ENCODE measurements at regions of chr1 and their contacts with region 1.

Region 1: DNA sequence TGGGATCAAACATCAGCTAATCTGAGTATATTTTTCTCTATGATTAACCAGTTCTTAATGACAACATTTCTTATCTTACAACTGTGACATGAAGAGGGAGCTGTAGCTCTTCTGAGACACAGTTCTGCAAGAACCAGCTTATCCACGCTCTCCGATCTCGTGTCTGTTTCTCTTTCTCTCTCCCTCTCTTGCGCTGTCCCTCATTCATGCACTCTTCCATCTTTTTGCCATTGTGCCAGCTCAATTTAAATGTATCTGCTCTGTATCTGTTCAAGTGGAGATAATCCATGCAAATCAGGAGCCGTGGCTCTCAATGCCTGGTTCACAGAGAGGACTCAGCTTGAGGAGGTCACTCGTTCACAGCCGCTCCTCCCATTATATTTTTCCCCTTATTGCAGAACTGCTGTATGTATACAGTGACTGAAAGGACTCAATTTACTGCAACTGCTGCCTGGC is 494.7 kb upstream of the ADGRL2 start:
- DNase-seq: peak; percentile 15 to 20
- H3K4me3 ChIP-seq: peak overlapping the region in 2 of 3 donors; percentile 29 to 42
- H3K27ac ChIP-seq: peak overlapping the region in 1 of 3 donors; percentile 15
- H3K4me1 ChIP-seq: no peaks in the 10 kb centered on the region
- H3K27me3 ChIP-seq: no peaks in the 10 kb centered on the region
- CTCF ChIP-seq: peak in 4 of 6 experiments; percentile 47 to 84 (median 66)
- POLR2A ChIP-seq: no peak

Region 2: DNA sequence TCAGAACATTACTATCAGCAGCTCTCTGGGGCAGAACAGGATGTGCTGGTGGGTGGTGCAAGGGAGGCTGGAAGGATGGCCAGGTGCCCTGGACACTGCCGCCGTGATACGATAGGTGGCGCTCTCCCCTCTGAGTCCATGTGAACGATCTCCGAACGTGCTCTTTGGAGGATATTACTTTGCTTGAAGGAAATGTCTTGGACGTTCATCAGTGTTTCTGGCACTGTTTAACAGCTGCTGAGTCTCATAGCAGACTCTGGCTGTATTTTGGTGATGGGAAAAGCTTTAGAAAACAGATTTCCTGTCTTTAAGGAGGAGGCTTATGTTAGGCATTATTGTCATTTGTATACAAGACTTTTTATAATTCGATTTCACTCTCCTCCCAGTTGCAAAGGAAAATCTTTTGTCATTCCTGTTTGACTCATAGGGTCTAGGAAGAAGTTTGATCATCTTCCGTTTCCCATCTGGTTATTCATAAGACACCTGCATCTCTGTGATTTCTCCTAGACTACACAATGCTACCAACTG is 108.5 kb after region 1 on chr1:
- intact Hi-C with region 1: loop called (anchors 10 kb)
- DNase-seq: peak; percentile 71 to 81
- H3K4me3 ChIP-seq: no peak overlapping the region
- H3K27ac ChIP-seq: no peak overlapping the region
- H3K4me1 ChIP-seq: peaks cover 0 to 9% of the 10 kb centered on the region in 2 donors
- H3K27me3 ChIP-seq: no peaks in the 10 kb centered on the region
- CTCF ChIP-seq: peak; percentile 50 to 90 (median 84)
- POLR2A ChIP-seq: no peak

Region 3: DNA sequence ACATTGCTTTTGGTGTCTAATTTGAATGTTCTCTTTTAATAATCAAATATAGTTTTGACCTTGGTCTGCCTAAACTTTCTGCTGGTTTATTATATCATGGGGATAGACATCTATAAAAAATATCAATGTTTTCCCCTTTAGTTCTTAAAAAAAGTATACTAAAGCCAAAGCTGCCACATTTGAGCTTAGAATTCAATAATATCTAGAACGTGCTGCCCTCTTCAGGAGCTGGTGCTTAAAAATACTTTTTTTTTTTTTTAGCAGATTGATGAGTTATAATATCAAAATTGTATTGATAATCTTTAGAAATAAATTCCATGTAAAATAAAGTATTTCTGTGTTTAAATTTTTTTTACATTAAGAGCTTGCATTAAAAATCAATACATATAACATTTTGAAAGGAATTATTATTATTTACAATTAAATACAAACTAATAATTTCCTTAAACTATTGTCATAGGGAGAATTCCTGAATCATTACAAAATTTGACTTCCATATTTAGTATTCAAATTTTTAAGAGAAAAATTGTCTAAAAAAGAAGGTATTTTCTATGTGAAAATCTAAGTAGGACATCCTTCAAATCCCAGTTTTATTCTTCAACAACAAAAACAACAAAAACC is 454.6 kb after region 1 on chr1:
- intact Hi-C with region 1: loop called (anchors 10 kb)
- DNase-seq: no peak
- H3K4me3 ChIP-seq: no peak overlapping the region
- H3K27ac ChIP-seq: no peak overlapping the region
- H3K4me1 ChIP-seq: peaks cover 0 to 5% of the 10 kb centered on the region in 2 donors
- H3K27me3 ChIP-seq: no peaks in the 10 kb centered on the region
- CTCF ChIP-seq: peak in 4 of 6 experiments; percentile 11 to 59 (median 54)
- POLR2A ChIP-seq: no peak

Measured in thyroid gland (tissue), 4 donors.